Left colon (tissue), 2 donors: ENCODE measurements at regions of chr1 and their contacts with region 1.

Region 1: DNA sequence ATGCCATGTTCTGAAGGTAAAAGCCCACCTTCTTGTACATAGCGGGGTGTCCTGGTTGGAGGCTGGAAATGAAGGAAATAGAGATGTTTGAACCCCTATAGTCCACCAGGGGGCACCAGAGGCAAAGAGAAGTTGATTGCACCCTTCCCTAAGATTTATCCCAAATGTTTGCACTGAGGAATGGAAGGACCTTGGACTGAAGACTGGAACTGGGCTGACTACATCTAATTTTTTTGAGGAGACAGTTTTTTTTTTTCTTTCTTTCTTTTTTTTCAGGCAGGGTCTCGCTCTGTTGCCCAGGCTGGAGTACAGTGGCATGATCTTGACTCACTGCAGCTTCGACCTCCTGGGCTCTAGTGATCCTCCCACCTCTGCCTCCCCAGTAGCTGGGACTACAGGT is 55.3 kb upstream of the EIF4G3 start:
- DNase-seq: peak in 1 of 2 donors; percentile 43
- ATAC-seq: peak; percentile 83

Region 2: DNA sequence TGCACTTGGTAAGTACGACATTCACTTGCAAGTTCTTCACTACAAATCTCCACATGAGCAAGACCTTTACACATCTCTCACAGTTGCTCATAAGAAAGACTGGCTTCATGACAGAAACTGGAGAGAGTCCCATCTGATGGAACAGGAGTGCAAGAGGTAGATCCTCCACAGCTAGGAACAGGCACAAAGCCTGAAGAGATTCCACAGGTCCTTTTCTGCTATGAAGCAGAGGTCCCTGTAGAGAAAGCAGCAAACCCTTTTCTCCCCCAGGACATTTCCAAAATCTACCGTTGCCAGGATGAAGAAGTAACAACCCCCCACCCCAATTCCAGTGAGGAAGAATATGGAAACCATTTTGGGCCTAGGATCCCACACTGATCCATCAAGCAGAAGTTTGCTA is 102.6 kb before region 1 on chr1:
- intact Hi-C with region 1: no loop called
- DNase-seq: no peak
- ATAC-seq: no peak

Region 3: GRCh38 chr1:21368515-21369289 is 136.7 kb after region 1 on chr1:
- intact Hi-C with region 1: loop called (anchors 2 to 10 kb)
- DNase-seq: peak; percentile 68 to 81
- ATAC-seq: peak; percentile 88

Region 4: DNA sequence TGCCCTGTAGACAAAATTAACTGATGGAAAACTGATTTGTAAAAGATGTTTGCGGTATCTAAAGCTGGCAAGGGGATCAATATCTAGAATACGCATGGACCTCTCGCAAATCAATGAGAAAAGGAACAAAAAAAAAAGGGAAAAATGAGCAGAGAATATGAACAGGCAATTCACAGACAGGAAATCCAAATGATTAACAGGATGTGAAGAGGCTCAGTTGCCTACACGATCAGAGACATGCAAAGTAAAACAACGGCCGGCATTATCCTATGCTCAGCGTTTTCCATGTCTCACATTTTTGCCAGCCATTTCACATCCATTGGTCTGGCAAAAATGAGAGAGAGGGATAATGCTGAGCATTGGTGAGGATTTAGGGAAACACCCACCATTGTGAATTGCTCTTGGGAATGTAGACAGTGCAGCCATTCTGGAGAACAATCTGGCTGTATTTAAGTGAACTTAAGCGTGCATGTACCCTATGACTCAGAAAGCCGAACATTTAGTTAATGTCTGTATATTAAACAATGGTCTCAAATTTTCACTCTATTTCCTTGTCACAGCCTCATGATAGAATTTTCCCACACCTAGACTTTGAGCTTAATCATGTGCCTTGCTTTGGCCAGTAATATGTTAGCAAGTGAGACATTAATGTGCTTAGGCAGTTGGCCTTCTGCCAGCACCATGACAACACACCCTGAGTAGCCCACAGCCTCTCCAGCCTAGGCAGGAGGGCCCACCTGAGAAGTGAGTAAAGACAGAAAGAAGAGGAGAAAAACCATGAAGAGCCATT is 146.9 kb after region 1 on chr1:
- intact Hi-C with region 1: loop called in 1 of 2 experiments (anchors 10 kb)
- DNase-seq: peak; percentile 50 to 51
- ATAC-seq: peak; percentile 93